ENCODE measurements at regions of chr17 and their contacts with region 1.

Region 1: DNA sequence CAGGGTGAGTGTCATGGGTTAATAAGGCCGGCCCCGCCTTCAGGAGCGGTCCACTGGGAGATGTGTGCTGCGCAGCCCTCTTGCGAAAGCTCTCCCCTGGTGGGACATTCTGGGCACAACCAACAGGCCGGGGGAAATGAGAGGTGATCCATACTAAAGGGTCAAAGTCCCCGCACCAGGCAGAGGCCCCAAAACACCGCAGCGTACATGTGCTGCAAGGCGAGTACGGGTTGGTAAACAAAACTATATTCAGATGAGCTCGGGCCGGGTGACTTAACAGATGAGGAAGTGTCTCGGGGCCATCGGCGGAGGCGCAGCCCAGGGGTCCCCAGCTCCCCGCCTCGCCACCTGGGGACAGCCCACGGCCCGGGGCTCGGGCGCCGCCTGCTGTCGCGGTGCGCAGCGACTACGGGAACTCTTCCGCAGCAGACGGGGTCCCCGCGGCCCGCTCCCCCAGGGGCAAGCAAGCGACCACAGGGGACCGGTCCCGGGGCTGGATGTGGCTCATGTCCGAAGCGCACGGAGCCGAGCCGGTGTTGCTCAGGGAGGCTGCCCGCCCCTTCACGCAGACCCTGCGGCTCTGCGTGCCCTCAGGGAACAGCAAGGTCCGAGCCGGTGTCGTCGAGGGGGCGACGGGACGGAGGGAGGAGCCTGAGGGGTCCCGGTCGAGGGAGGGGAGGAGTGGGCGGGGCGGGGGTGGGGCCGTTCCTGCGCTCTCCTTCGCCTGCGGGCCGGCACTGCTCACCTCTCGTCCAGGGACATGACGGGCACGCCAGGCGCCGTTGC is at the start of gene RAB37:
- DNase-seq: peak in 4 of 5 donors; percentile 37 to 64 (median 44)
- H3K4me3 ChIP-seq: peak within 1 kb of the TSS; percentile 79 to 100
- H3K4me3 Mint-ChIP-seq: peak within 1 kb of the TSS; percentile 91 to 96 (median 94)
- H3K27ac ChIP-seq: peak within 1 kb of the TSS; percentile 64
- H3K27ac Mint-ChIP-seq: peak within 1 kb of the TSS in 6 of 7 donors; percentile 85 to 93 (median 87)
- H3K4me1 ChIP-seq: peaks cover 53% of the 10 kb centered on the region
- H3K4me1 Mint-ChIP-seq: peaks cover 31 to 60% (median 40%) of the 10 kb centered on the region in 4 donors
- H3K27me3 ChIP-seq: no peaks in the 10 kb centered on the region
- H3K27me3 Mint-ChIP-seq: no peaks in the 10 kb centered on the region
- total RNA-seq, gene RAB37: 23.2 to 25.9 TPM

Region 2: GRCh38 chr17:74379495-74380085 is 357.1 kb before region 1 on chr17:
- CTCF ChIA-PET with region 1: interaction called, 3 read pairs
- POLR2A ChIA-PET with region 1: no interaction called
- intact Hi-C with region 1: loop called (anchors 10 kb)
- DNase-seq: peak; percentile 84 to 88 (median 87)
- H3K4me3 ChIP-seq: no peak overlapping the region
- H3K4me3 Mint-ChIP-seq: peak overlapping the region in 1 of 8 donors; percentile 13
- H3K27ac ChIP-seq: no peak overlapping the region
- H3K27ac Mint-ChIP-seq: no peak overlapping the region
- H3K4me1 ChIP-seq: peaks cover 9% of the 10 kb centered on the region
- H3K4me1 Mint-ChIP-seq: peaks cover 0 to 8% (median under 1%) of the 10 kb centered on the region in 4 donors
- H3K27me3 ChIP-seq: no peaks in the 10 kb centered on the region
- H3K27me3 Mint-ChIP-seq: peaks cover 2 to 4% of the 10 kb centered on the region in 2 donors

Region 3: DNA sequence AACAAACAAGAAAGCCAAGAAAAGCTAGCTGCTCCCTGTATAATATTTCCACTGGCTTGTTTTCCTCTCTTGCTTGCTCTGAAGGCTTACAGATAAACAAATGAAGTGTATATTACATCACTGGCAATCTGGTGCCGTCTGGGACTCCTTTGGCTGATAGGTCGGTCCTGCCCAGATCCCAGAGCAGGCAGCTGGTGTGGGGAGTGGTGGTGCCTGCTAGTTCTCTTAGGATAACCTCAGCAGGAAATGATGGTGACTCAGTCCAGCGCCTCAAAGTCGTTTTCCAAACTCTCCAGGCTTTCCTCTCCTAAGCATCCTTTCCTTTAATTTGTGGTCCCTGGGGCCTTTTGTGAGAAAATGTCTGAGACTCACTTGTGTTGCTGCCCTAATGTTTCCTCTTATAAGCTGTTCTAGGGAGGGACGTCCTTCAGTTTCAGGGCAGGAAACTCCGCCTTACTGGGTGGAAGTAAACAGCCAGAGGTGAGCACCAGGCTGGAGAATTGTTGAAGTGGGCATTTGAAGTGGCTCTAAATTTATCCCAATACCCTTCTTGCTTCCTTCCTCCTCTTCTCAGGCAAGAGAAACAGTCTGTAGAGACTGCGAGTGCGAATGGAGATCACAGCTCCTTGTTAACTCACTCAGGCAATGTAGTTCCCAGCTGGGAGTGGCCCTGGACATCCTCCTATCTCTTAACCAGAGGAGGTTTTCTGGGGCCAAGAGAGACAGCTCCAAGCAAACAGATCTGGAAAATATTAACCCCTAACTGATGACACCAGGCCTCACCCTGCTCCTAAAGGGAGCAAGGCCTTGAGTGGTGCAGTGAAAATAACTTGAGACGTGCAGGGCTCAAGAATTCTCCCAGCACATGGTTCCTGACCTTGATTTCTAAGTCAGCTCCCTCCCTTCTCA is 58.9 kb before region 1 on chr17:
- CTCF ChIA-PET with region 1: interaction called, 39 read pairs
- POLR2A ChIA-PET with region 1: interaction called, 8 read pairs
- intact Hi-C with region 1: loop called (anchors 5 kb)
- DNase-seq: peak in 3 of 5 donors; percentile 5 to 20 (median 8)
- H3K4me3 ChIP-seq: no peak overlapping the region
- H3K4me3 Mint-ChIP-seq: peak overlapping the region in 6 of 8 donors; percentile 7 to 78 (median 38)
- H3K27ac ChIP-seq: no peak overlapping the region
- H3K27ac Mint-ChIP-seq: peak overlapping the region in 6 of 7 donors; percentile 36 to 86 (median 67)
- H3K4me1 ChIP-seq: peaks cover 17% of the 10 kb centered on the region
- H3K4me1 Mint-ChIP-seq: peaks cover 15 to 27% (median 22%) of the 10 kb centered on the region in 4 donors
- H3K27me3 ChIP-seq: peaks cover 3% of the 10 kb centered on the region
- H3K27me3 Mint-ChIP-seq: peaks cover 9 to 24% of the 10 kb centered on the region in 2 donors

Region 4: DNA sequence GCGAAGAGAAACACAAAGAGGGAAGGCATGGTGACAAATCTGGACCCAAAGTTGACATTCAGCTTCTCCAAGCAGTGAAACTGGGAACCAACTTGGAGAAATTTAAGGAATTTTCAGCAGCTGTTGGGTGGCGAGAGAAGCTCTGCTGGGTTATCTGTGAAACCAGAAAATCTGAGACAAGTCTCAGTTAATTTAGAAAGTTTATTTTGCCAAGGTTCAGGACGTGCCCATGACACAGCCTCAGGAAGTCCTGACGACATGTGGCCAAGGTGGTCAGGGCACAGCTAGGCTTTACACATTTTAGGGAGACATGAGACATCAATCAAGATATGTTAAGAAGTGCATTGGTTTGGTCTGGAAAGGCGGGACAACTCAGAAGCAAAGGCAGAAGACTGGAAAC is 12.8 kb before region 1 on chr17:
- CTCF ChIA-PET with region 1: interaction called, 27 read pairs
- POLR2A ChIA-PET with region 1: interaction called, 5 read pairs
- intact Hi-C with region 1: no loop called
- DNase-seq: no peak
- H3K4me3 ChIP-seq: no peak overlapping the region
- H3K4me3 Mint-ChIP-seq: no peak overlapping the region
- H3K27ac ChIP-seq: no peak overlapping the region
- H3K27ac Mint-ChIP-seq: no peak overlapping the region
- H3K4me1 ChIP-seq: no peaks in the 10 kb centered on the region
- H3K4me1 Mint-ChIP-seq: peaks cover 0 to 2% (median under 1%) of the 10 kb centered on the region in 4 donors
- H3K27me3 ChIP-seq: no peaks in the 10 kb centered on the region
- H3K27me3 Mint-ChIP-seq: peaks cover 0 to 3% of the 10 kb centered on the region in 2 donors

Region 5: GRCh38 chr17:74759243-74759801 is 22.6 kb after region 1 on chr17:
- CTCF ChIA-PET with region 1: interaction called, 74 read pairs
- POLR2A ChIA-PET with region 1: interaction called, 33 read pairs
- intact Hi-C with region 1: no loop called
- DNase-seq: peak; percentile 63 to 75 (median 64)
- H3K4me3 ChIP-seq: peak overlapping the region; percentile 34 to 54
- H3K4me3 Mint-ChIP-seq: peak overlapping the region; percentile 74 to 90 (median 84)
- H3K27ac ChIP-seq: peak overlapping the region; percentile 65
- H3K27ac Mint-ChIP-seq: peak overlapping the region; percentile 84 to 93 (median 90)
- H3K4me1 ChIP-seq: peaks cover 94% of the 10 kb centered on the region
- H3K4me1 Mint-ChIP-seq: peaks cover 42 to 84% (median 65%) of the 10 kb centered on the region in 4 donors
- H3K27me3 ChIP-seq: no peaks in the 10 kb centered on the region
- H3K27me3 Mint-ChIP-seq: no peaks in the 10 kb centered on the region

Region 6: DNA sequence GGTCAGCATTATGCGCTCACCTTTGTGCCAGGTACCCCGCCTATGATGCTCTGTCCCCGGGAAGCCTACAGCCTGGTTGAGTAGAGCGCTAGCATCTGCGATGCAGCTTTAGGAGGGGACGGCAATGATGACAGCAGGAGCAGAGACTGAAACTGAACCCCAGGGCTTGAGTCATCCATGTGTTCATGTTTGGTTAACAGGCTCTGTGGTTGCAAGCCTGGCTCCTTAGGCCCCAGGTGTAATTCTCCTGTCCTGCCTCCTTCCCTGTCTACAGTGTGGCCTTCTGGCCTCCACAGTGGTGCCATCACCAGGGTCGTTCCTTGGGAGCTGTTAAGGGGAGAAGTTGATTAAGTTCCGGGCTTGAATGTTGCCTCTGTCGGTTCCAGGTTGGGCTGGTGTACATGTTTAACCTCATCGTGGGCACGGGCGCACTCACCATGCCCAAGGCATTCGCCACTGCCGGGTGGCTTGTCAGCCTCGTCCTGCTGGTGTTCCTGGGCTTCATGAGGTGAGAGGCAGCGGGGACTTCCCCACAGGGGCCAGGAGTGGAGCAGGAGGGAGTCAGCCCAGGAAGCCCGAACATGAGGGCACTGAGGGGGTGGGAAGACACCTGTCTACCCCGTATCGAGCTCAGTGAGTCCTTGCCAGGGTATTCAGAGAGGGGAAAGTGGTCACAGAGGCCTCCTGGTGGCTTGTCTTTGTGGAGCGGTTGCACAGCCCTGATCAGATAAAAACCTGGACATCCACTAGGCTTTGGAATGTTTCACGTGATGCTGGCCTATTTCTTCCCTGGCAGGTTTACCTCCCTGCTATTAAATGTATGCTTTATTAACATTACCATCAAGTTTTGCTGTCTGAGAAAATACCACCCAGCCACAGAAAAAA is 48.6 kb after region 1 on chr17:
- CTCF ChIA-PET with region 1: interaction called, 39 read pairs
- POLR2A ChIA-PET with region 1: interaction called, 195 read pairs
- intact Hi-C with region 1: no loop called
- DNase-seq: no peak
- H3K4me3 ChIP-seq: no peak overlapping the region
- H3K4me3 Mint-ChIP-seq: peak overlapping the region in 1 of 8 donors; percentile 22
- H3K27ac ChIP-seq: no peak overlapping the region
- H3K27ac Mint-ChIP-seq: peak overlapping the region; percentile 7 to 78 (median 64)
- H3K4me1 ChIP-seq: peaks cover 37% of the 10 kb centered on the region
- H3K4me1 Mint-ChIP-seq: peaks cover 34 to 72% (median 46%) of the 10 kb centered on the region in 4 donors
- H3K27me3 ChIP-seq: no peaks in the 10 kb centered on the region
- H3K27me3 Mint-ChIP-seq: no peaks in the 10 kb centered on the region

Region 7: DNA sequence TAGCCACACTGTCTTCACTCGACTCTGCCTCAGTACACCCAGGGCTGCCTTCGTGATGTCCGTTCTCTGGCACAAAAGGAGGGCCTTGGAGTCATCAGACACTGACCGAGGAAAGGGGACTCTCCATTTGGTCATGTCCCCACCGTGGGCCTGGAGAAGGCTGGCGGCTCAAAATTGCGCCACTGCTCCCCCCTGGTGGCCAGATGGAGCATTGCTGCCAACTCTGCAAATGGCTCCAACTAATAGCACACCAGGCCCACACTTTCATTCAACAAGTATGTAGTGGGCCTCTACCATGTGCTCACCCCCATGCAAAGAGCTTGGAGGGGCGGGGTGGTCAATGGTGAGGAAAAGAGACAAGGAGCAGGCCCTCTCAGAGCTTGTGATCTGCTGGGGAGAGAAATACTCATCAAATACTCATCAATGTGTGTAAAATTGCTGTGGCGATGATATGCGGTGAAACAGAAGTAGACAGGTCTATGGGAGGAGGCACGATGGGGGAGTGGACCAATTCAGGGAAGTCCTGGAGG is 128.2 kb after region 1 on chr17:
- CTCF ChIA-PET with region 1: interaction called, 18 read pairs
- POLR2A ChIA-PET with region 1: interaction called, 4 read pairs
- intact Hi-C with region 1: no loop called
- DNase-seq: peak; percentile 52 to 68 (median 62)
- H3K4me3 ChIP-seq: no peak overlapping the region
- H3K4me3 Mint-ChIP-seq: peak overlapping the region in 1 of 8 donors; percentile 65
- H3K27ac ChIP-seq: no peak overlapping the region
- H3K27ac Mint-ChIP-seq: peak overlapping the region in 2 of 7 donors; percentile 6 to 68
- H3K4me1 ChIP-seq: peaks cover 23% of the 10 kb centered on the region
- H3K4me1 Mint-ChIP-seq: peaks cover 12 to 20% (median 15%) of the 10 kb centered on the region in 4 donors
- H3K27me3 ChIP-seq: peaks cover 11% of the 10 kb centered on the region
- H3K27me3 Mint-ChIP-seq: peaks cover 1 to 7% of the 10 kb centered on the region in 2 donors

Measured in CD4-positive, alpha-beta memory T cell (primary cell).